Activated B cell treated with CpG ODN at 0.5 μM for 24 hours (primary cell): ENCODE measurements at regions of chr10 and their contacts with region 1.

Region 1: DNA sequence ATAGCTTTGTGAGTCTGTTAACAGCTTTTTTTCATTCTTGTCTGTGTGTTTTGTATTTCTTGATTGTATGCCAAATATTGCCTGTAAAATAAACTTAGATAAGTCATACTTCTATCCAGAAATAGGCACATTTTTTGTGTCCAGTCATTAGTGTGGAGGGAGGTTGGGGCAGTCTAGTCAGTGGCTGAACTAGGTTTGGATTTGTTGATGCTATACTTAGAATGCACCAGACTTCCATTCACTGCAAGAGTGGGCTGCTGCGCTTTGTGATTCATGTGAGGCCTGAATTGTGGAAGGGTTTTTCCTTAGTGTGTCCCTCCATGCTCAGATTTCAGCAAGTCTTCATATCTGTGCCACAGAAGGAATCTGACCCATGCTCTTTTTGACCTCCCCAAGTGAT is 50.0 kb downstream of the TRUB1 start:
- DNase-seq: no peak
- ATAC-seq: no peak
- H3K4me3 Mint-ChIP-seq: no peak overlapping the region
- H3K27ac Mint-ChIP-seq: no peak overlapping the region
- H3K4me1 Mint-ChIP-seq: no peaks in the 10 kb centered on the region
- H3K27me3 Mint-ChIP-seq: no peaks in the 10 kb centered on the region
- CTCF ChIP-seq: no peak

Region 2: DNA sequence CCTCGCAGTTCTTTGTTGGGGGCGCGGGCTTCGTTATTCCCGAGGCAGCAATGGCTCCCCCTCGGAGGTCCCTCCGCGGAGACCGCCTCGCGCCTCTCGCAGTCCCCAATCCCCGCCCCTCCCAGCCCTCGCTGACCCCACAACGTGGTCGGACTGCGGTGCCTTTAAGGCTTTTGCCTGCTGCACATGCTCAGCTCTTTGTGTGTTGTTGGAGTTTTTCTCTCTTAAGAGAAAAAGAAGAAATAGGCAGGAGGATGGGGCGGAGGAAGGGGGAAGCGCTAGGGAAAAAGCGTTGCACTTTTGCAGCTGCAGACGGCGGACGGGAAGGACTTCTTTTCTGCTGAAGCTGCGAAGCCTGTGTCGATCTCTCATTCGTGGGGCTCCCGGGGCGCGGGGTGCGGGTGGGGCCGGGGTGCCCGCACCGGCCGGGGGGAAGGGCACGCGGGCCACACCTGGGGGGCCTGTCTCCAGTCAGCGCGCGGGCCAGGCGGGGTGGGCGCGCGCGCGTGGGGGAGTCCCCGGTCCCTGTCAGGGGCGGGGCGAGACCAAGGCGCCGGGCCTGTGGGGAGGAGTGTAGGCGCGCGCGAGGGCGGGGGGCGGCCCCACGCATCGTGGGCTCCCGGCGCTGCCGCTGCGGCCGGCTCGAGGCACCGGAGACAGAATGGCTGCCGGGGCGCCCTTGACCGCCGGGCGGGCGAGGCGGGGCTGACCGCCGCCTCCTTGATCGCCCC is 104.7 kb after region 1 on chr10:
- CTCF ChIA-PET with region 1: no interaction called
- POLR2A ChIA-PET with region 1: interaction called, 11 read pairs
- intact Hi-C with region 1: no loop called
- DNase-seq: peak; percentile 60
- ATAC-seq: peak; percentile 84
- H3K4me3 Mint-ChIP-seq: peak overlapping the region; percentile 85
- H3K27ac Mint-ChIP-seq: no peak overlapping the region
- H3K4me1 Mint-ChIP-seq: peaks cover 13% of the 10 kb centered on the region
- H3K27me3 Mint-ChIP-seq: peaks cover 35% of the 10 kb centered on the region
- CTCF ChIP-seq: no peak